ENCODE measurements at regions of chr20 and their contacts with region 1.

Region 1: GRCh38 chr20:25213566-25214425 is 18.3 kb downstream of the ENTPD6 start:
- DNase-seq: no peak
- H3K4me3 ChIP-seq: no peak overlapping the region
- H3K4me3 Mint-ChIP-seq: no peak overlapping the region
- H3K27ac Mint-ChIP-seq: no peak overlapping the region
- H3K4me1 ChIP-seq: no peaks in the 10 kb centered on the region
- H3K4me1 Mint-ChIP-seq: no peaks in the 10 kb centered on the region
- H3K27me3 ChIP-seq: no peaks in the 10 kb centered on the region
- H3K27me3 Mint-ChIP-seq: no peaks in the 10 kb centered on the region
- CTCF ChIP-seq: no peak

Region 2: GRCh38 chr20:23727016-23727415 is 1486.8 kb before region 1 on chr20:
- CTCF ChIA-PET with region 1: no interaction called
- POLR2A ChIA-PET with region 1: no interaction called
- intact Hi-C with region 1: no loop called
- DNase-seq: no peak
- H3K4me3 ChIP-seq: no peak overlapping the region
- H3K4me3 Mint-ChIP-seq: no peak overlapping the region
- H3K27ac Mint-ChIP-seq: no peak overlapping the region
- H3K4me1 ChIP-seq: no peaks in the 10 kb centered on the region
- H3K4me1 Mint-ChIP-seq: peaks cover 6% of the 10 kb centered on the region
- H3K27me3 ChIP-seq: no peaks in the 10 kb centered on the region
- H3K27me3 Mint-ChIP-seq: no peaks in the 10 kb centered on the region
- CTCF ChIP-seq: no peak

Region 3: DNA sequence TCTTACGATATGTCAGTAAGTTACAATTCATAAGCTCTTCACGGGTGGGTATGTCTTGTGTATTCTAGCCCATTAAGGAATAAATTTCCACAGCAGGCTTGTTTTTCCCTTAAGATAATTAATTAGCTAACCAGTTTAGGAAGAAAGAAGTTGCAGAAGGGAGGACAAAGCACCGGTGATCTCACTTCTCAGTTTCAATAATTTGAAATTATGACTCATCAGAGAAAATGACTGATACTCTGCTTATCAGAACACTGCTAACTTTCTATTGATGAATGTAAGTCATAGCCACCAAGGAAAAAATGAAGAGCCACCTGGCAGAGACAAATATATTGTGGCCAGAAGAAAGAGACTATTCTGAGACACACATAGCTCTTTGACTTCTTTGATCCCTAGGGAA is 53.3 kb before region 1 on chr20:
- CTCF ChIA-PET with region 1: no interaction called
- POLR2A ChIA-PET with region 1: no interaction called
- intact Hi-C with region 1: no loop called
- DNase-seq: no peak
- H3K4me3 ChIP-seq: no peak overlapping the region
- H3K4me3 Mint-ChIP-seq: no peak overlapping the region
- H3K27ac Mint-ChIP-seq: no peak overlapping the region
- H3K4me1 ChIP-seq: 0 out of 2 replicates have a peak, but pooled peaks cover 1% of the 10 kb centered on the region
- H3K4me1 Mint-ChIP-seq: no peaks in the 10 kb centered on the region
- H3K27me3 ChIP-seq: no peaks in the 10 kb centered on the region
- H3K27me3 Mint-ChIP-seq: peaks cover 7% of the 10 kb centered on the region
- CTCF ChIP-seq: no peak

Region 4: GRCh38 chr20:25177890-25178321 is 35.9 kb before region 1 on chr20:
- CTCF ChIA-PET with region 1: no interaction called
- POLR2A ChIA-PET with region 1: no interaction called
- intact Hi-C with region 1: no loop called
- DNase-seq: no peak
- H3K4me3 ChIP-seq: no peak overlapping the region
- H3K4me3 Mint-ChIP-seq: no peak overlapping the region
- H3K27ac Mint-ChIP-seq: no peak overlapping the region
- H3K4me1 ChIP-seq: peaks cover 9% of the 10 kb centered on the region; the same call in 1 of the 2 replicates
- H3K4me1 Mint-ChIP-seq: no peaks in the 10 kb centered on the region
- H3K27me3 ChIP-seq: no peaks in the 10 kb centered on the region
- H3K27me3 Mint-ChIP-seq: no peaks in the 10 kb centered on the region
- CTCF ChIP-seq: no peak

Region 5: DNA sequence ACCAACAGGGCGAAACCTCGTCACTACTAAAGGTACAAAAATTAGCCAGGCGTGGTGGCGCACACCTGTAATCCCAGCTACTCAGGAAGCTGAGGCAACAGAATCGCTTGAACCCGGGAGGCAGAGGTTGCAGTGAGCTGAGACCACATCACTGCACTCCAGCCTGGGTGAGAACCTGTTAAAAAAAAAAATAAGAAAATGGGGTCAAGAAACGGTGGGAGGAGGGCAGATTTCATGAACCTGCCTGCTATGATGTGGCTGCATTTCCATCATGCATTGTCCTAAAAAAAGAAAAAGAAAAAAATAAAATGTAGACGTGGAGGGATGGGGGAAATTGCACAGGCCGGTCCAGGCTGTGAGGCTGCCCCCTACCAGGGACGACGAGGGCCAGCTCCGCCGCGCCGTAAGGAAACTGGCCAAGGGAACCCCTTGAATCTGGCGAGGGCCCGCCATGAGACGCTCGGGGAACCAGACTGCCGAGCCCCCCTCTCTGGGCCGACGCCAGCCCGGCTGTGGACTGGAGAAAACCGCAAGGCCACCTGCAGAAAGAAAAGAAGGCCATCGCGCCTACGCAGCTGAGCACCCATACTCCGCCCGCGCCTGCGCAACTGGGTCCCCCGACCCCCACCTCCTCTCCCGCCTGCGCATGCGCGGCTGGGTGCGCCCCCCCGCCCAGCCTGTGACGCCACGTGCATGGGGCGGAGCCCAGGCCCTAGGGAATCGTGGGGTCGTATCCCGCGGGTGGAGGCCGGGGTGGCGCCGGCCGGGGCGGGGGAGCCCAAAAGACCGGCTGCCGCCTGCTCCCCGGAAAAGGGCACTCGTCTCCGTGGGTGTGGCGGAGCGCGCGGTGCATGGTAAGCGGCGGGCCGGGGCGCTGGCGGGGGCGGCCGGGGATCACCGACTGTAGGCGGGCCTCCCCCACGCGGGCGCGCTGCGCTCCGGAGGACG is 18.5 kb before region 1 on chr20 and contains the start of gene ENTPD6:
- CTCF ChIA-PET with region 1: no interaction called
- POLR2A ChIA-PET with region 1: no interaction called
- intact Hi-C with region 1: loop called (anchors 2 kb)
- DNase-seq: peak; percentile 92 to 97
- H3K4me3 ChIP-seq: peak within 1 kb of the TSS; percentile 80
- H3K4me3 Mint-ChIP-seq: peak within 1 kb of the TSS; percentile 78
- H3K27ac Mint-ChIP-seq: peak within 1 kb of the TSS; percentile 33
- H3K4me1 ChIP-seq: peaks cover 4% of the 10 kb centered on the region; the same call in 1 of the 2 replicates
- H3K4me1 Mint-ChIP-seq: no peaks in the 10 kb centered on the region
- H3K27me3 ChIP-seq: no peaks in the 10 kb centered on the region
- H3K27me3 Mint-ChIP-seq: no peaks in the 10 kb centered on the region
- CTCF ChIP-seq: peak in 1 of 2 experiments; percentile 48
- total RNA-seq, gene ENTPD6: 86.6 and 89.4 TPM in 2 replicates